AG04449 (cell line): ENCODE measurements at regions of chr7 and their contacts with region 1.

Region 1: GRCh38 chr7:113159746-113160339 is 41.5 kb upstream of the SMIM30 start:
- DNase-seq: no peak
- H3K4me3 ChIP-seq: no peak overlapping the region
- CTCF ChIP-seq: peak; percentile 63

Region 2: GRCh38 chr7:113094517-113095249 is 65.2 kb before region 1 on chr7:
- CTCF ChIA-PET with region 1: no interaction called
- POLR2A ChIA-PET with region 1: no interaction called
- DNase-seq: no peak
- H3K4me3 ChIP-seq: no peak overlapping the region
- CTCF ChIP-seq: no peak

Region 3: DNA sequence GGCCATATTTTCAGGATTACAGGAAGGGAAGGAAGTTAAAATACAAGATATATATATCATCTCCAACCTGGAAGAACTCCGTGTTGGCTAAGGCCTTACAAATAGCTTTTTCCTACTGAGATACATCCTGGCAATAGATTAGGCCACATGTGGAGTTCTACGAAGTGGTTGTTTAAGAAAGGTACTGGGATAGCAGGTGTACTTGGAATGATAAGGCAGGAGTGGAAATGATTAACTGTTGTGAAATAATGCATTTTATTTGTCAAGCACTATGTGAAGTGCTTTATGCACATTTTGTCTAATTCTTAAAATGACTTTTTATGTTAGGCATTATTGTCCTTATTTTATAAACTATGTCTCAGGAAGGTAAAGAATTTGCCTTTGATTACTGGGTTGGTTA is 22.6 kb before region 1 on chr7:
- CTCF ChIA-PET with region 1: interaction called, 30 read pairs
- POLR2A ChIA-PET with region 1: no interaction called
- DNase-seq: no peak
- H3K4me3 ChIP-seq: no peak overlapping the region
- CTCF ChIP-seq: no peak

Region 4: DNA sequence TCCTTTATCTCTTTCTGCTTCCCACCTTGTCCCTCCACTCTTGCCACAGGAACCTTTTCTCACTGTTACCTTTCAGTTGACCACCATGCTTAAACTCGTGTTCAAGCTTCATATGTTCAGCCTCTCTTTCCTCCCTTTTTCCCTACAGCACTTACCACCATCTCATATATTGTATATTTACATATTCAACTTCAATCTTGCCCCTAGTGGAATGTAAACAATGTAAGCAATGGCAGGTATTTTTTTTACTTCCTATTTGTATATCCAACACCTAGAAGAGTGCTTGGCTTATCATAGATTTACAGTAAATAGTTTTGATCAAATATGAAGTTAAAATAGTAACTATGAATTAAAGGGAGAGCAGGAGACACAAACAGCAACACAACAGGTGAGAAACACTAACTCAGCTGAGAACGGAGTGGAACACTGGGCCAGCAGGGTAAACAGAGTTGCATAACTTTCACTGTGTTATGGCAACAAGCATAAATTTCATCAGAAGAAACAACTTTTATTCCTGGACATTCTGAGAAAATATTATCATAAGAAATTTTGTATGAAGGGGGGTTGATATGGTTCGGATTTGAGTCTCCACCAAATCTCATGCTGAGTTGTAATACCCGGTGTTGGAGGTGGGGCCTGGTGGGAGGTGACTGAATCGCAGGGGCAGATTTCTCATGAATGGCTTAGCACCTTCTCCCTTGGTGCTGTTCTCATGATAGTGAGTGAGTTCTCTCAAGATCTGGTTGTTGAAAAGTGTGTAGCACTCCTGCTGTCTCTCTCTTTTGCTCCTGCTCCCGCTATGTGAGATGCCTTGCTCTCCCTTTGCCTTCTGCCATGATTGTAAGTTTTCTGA is 10.8 kb after region 1 on chr7:
- CTCF ChIA-PET with region 1: interaction called, 25 read pairs
- POLR2A ChIA-PET with region 1: no interaction called
- DNase-seq: no peak
- H3K4me3 ChIP-seq: no peak overlapping the region
- CTCF ChIP-seq: no peak

Region 5: GRCh38 chr7:113199841-113200240 is 40.0 kb after region 1 on chr7:
- CTCF ChIA-PET with region 1: interaction called, 11 read pairs
- POLR2A ChIA-PET with region 1: no interaction called
- DNase-seq: peak; percentile 33
- H3K4me3 ChIP-seq: no peak overlapping the region
- CTCF ChIP-seq: no peak

Region 6: GRCh38 chr7:113421696-113422330 is 262.0 kb after region 1 on chr7:
- CTCF ChIA-PET with region 1: interaction called, 88 read pairs
- POLR2A ChIA-PET with region 1: no interaction called
- DNase-seq: peak; percentile 31
- H3K4me3 ChIP-seq: no peak overlapping the region
- CTCF ChIP-seq: peak; percentile 92

Region 7: DNA sequence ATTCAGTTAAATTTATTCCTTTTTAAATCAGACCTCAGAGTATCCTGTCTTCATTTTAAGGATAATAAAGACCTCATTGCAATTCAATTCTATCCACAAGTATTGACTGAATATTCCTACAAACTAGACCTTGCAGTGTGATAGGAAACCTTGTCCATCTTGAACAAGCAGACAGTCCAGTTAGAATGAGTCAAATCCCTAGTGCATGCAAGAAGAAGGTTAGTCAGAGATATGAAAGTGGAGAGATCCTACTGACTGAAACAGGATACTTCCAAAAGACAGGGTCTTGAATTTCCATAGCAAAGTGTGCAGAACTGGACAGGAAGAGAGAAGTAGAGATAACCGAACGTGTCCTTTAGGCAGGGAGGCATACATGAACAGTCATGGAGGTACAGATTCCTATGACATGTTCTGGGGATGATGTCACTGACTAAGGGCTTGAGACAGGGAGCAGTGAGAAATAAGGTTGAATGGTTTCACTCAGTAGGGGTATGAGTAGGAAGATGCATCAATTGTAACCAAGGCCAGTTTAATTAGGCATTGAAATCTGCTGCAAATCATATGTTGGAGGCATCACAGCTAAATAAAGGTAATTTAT is 713.8 kb after region 1 on chr7:
- CTCF ChIA-PET with region 1: no interaction called
- POLR2A ChIA-PET with region 1: no interaction called
- DNase-seq: no peak
- H3K4me3 ChIP-seq: no peak overlapping the region
- CTCF ChIP-seq: no peak